ENCODE measurements at regions of chr19 and their contacts with region 1.

Region 1: GRCh38 chr19:56252699-56253422 is 19.7 kb upstream of the EDDM13 start:
- DNase-seq: peak; percentile 70
- ATAC-seq: peak; percentile 96
- H3K4me3 ChIP-seq: no peak overlapping the region
- H3K27ac ChIP-seq: no peak overlapping the region
- H3K4me1 ChIP-seq: peaks cover 0 to 3% of the 10 kb centered on the region in 2 experiments; a peak in 1 of 4 replicates
- H3K27me3 ChIP-seq: no peaks in the 10 kb centered on the region
- CTCF ChIP-seq: peak; percentile 67 to 99 (median 91); a peak in 5 of 6 replicates
- POLR2A ChIP-seq: no peak
- RAD21 ChIP-seq: peak; percentile 60

Region 2: GRCh38 chr19:56066152-56067023 is 186.5 kb before region 1 on chr19:
- CTCF ChIA-PET with region 1: interaction called, 37 read pairs
- POLR2A ChIA-PET with region 1: interaction called, 4 read pairs
- RAD21 ChIA-PET with region 1: interaction called, 3 to 5 read pairs
- intact Hi-C with region 1: loop called (anchors 2 kb)
- DNase-seq: peak; percentile 44
- ATAC-seq: peak; percentile 96
- H3K4me3 ChIP-seq: peak overlapping the region; percentile 30 to 46
- H3K27ac ChIP-seq: no peak overlapping the region
- H3K4me1 ChIP-seq: peaks cover 6 to 10% of the 10 kb centered on the region in 2 experiments
- H3K27me3 ChIP-seq: peaks cover 11% of the 10 kb centered on the region; the same call in 1 of the 2 replicates
- CTCF ChIP-seq: peak; percentile 70 to 91 (median 88)
- POLR2A ChIP-seq: no peak
- RAD21 ChIP-seq: peak; percentile 74

Region 3: DNA sequence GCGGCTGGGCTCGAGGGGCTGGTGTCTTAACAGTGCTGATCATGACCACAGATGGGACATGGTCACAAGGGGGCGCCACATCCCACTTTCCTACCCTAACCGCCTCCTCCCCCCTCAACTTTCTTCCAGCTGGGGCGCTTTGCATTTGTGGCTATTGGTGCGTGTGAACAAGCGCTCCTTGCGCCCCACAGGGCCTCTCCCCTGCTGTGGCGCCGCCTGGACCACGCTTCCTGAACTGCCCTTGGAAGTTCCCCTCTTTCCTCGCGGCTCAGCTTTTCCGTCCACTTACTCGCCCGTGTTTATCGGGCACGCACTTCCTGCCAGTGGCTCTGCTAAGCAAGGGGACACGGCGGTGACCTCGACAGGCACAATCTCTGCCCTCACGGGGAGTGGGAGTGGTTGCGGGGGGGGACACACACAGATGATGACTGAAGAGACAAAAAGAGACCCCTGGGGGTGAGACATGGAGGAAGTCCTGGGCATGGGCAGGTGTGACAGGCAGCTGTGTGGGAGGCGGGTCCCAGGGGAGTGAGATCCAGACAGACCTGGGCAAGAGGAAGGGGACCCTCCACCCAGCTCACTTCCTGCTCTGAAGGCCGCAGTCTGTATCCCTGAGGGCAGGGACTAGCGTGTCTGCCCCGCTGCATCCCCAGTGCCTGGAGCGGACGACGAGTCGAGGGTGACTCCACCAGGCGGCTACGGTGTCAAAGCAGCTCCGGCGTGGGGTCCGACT is 172.0 kb before region 1 on chr19:
- CTCF ChIA-PET with region 1: interaction called, 13 read pairs
- POLR2A ChIA-PET with region 1: no interaction called
- RAD21 ChIA-PET with region 1: interaction called, 3 read pairs
- intact Hi-C with region 1: no loop called
- DNase-seq: peak; percentile 39
- ATAC-seq: peak; percentile 82
- H3K4me3 ChIP-seq: no peak overlapping the region
- H3K27ac ChIP-seq: no peak overlapping the region
- H3K4me1 ChIP-seq: peaks cover 6 to 7% of the 10 kb centered on the region in 2 experiments; a peak in 3 of 4 replicates
- H3K27me3 ChIP-seq: no peaks in the 10 kb centered on the region
- CTCF ChIP-seq: peak; percentile 44 to 53 (median 53); a peak in 5 of 6 replicates
- POLR2A ChIP-seq: no peak
- RAD21 ChIP-seq: peak; percentile 61

Region 4: GRCh38 chr19:56201973-56202372 is 50.9 kb before region 1 on chr19 and contains the start of gene ZSCAN5C:
- CTCF ChIA-PET with region 1: no interaction called
- POLR2A ChIA-PET with region 1: no interaction called
- RAD21 ChIA-PET with region 1: no interaction called
- intact Hi-C with region 1: no loop called
- DNase-seq: no peak
- ATAC-seq: no peak
- H3K4me3 ChIP-seq: no peak within 1 kb of the TSS
- H3K27ac ChIP-seq: no peak within 1 kb of the TSS
- H3K4me1 ChIP-seq: no peaks in the 10 kb centered on the region
- H3K27me3 ChIP-seq: peaks cover 8% of the 10 kb centered on the region
- CTCF ChIP-seq: no peak
- POLR2A ChIP-seq: no peak
- RAD21 ChIP-seq: no peak
- total RNA-seq, gene ZSCAN5C: not detected

Region 5: GRCh38 chr19:56218961-56219360 is 33.9 kb before region 1 on chr19:
- CTCF ChIA-PET with region 1: no interaction called
- POLR2A ChIA-PET with region 1: no interaction called
- RAD21 ChIA-PET with region 1: no interaction called
- intact Hi-C with region 1: no loop called
- DNase-seq: no peak
- ATAC-seq: no peak
- H3K4me3 ChIP-seq: no peak overlapping the region
- H3K27ac ChIP-seq: no peak overlapping the region
- H3K4me1 ChIP-seq: no peaks in the 10 kb centered on the region
- H3K27me3 ChIP-seq: no peaks in the 10 kb centered on the region
- CTCF ChIP-seq: no peak
- POLR2A ChIP-seq: no peak
- RAD21 ChIP-seq: no peak

Region 6: GRCh38 chr19:56266051-56266450 is 13.2 kb after region 1 on chr19:
- CTCF ChIA-PET with region 1: interaction called, 20 read pairs
- POLR2A ChIA-PET with region 1: no interaction called
- RAD21 ChIA-PET with region 1: no interaction called
- intact Hi-C with region 1: no loop called
- DNase-seq: no peak
- ATAC-seq: no peak
- H3K4me3 ChIP-seq: no peak overlapping the region
- H3K27ac ChIP-seq: no peak overlapping the region
- H3K4me1 ChIP-seq: no peaks in the 10 kb centered on the region
- H3K27me3 ChIP-seq: no peaks in the 10 kb centered on the region
- CTCF ChIP-seq: no peak
- POLR2A ChIP-seq: no peak
- RAD21 ChIP-seq: no peak

Region 7: DNA sequence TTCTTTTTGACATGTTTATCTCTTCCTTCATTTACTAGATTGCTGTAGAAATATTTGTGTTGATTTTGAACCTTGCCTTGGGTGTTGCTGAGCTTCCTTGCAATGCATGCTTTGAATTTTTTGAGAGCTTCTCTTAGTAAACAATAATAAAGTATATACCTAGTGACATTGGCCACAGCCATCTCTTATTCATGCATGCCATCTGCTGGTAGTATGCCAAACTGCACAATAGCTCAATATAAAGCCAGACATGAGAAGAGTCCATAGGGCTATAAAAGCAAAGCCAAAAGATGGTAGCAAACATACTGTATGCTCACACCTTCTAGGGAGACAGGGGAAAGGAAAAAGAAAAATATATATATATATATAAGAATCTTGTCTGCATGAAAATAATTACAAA is 80.6 kb after region 1 on chr19:
- CTCF ChIA-PET with region 1: interaction called, 229 read pairs
- POLR2A ChIA-PET with region 1: interaction called, 6 read pairs
- RAD21 ChIA-PET with region 1: interaction called, 22 to 25 read pairs
- intact Hi-C with region 1: loop called (anchors 1 kb)
- DNase-seq: peak; percentile 48
- ATAC-seq: peak; percentile 84
- H3K4me3 ChIP-seq: no peak overlapping the region
- H3K27ac ChIP-seq: no peak overlapping the region
- H3K4me1 ChIP-seq: no peaks in the 10 kb centered on the region
- H3K27me3 ChIP-seq: peaks cover 3% of the 10 kb centered on the region; the same call in 1 of the 2 replicates
- CTCF ChIP-seq: peak; percentile 68 to 71 (median 69); a peak in 5 of 6 replicates
- POLR2A ChIP-seq: no peak
- RAD21 ChIP-seq: peak; percentile 81

Region 8: DNA sequence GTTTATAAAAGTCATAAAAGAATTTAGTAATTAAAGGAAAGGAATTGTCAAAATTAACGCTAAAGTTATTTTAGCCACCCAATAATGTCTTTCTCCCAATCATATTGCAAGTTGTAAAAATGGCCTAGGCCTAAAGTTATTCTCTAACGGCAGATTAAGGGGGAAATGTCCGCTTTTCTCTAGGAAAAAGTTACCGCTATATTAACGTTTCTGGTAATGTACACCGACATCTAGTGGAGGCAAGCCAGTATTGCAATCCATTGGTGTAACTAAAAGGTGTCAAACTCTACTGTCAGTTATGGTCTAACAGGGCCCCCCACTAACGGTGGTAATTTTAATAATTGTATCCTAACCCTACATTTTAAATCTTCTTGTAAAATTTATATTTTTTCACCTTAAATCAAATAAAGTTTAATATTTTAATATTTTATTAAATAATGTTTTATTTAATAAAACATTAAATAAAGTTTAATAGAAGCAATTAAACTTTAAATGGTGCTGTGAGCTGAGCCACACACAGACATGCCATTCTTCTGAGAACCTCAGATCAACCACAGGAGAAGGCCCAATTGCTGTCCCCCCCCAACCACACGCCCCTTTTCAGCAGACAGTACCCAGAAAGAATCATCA is 97.7 kb after region 1 on chr19:
- CTCF ChIA-PET with region 1: interaction called, 25 read pairs
- POLR2A ChIA-PET with region 1: interaction called, 4 read pairs
- RAD21 ChIA-PET with region 1: no interaction called
- intact Hi-C with region 1: loop called (anchors 5 kb)
- DNase-seq: peak; percentile 24
- ATAC-seq: peak; percentile 67
- H3K4me3 ChIP-seq: no peak overlapping the region
- H3K27ac ChIP-seq: no peak overlapping the region
- H3K4me1 ChIP-seq: no peaks in the 10 kb centered on the region
- H3K27me3 ChIP-seq: no peaks in the 10 kb centered on the region
- CTCF ChIP-seq: peak; percentile 33 to 88 (median 76); a peak in 5 of 6 replicates
- POLR2A ChIP-seq: no peak
- RAD21 ChIP-seq: peak; percentile 57

Measured in HCT116 (cell line).